ENCODE measurements at regions of chr12 and their contacts with region 1.

Region 1: DNA sequence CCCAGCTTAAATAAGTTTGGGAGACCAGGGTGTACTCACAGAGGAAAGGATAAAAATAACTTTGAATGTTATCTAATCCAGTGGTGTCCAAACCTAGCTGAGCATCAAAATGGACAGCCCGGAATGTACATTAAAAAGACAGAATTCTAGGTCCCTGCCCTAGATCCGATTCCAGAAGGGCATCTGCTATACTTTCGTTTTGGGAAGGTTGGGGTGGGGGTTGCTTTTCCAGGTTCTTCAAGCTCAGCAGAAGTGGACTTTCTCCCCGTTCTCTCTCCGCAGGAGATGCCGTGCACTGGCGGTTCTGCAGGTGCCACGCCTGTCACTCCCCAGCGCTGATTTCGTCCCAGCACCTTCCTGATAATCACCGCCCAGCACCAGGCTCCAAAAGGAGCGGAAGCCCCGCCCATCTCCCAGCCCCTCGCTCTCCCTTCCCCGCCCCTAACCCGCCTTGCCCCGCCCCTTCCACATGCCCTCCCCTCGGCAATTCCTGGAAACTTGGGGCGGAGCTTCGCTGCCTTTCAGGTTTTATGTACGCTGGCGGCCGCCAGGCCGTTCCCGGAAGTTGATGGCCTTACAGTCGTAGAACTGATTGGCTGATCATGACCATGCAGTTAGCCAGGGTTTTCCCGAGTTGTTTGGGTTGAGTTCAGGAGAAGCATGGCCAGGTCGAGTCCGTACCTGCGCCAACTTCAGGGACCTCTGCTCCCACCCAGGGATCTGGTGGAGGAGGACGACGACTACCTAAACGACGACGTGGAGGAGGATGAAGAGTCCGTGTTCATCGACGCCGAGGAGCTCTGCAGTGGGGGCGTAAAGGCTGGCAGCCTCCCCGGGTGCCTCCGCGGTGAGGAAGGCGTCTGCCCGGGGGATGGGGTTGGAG is at the start of gene HELB:
- DNase-seq: peak; percentile 94
- H3K4me3 Mint-ChIP-seq: peak within 1 kb of the TSS; percentile 100
- H3K27ac Mint-ChIP-seq: peak within 1 kb of the TSS; percentile 99
- H3K4me1 Mint-ChIP-seq: peaks cover 61% of the 10 kb centered on the region
- H3K27me3 Mint-ChIP-seq: peaks cover 3% of the 10 kb centered on the region
- total RNA-seq, gene HELB: 20.5 and 21.5 TPM in 2 replicates

Region 2: DNA sequence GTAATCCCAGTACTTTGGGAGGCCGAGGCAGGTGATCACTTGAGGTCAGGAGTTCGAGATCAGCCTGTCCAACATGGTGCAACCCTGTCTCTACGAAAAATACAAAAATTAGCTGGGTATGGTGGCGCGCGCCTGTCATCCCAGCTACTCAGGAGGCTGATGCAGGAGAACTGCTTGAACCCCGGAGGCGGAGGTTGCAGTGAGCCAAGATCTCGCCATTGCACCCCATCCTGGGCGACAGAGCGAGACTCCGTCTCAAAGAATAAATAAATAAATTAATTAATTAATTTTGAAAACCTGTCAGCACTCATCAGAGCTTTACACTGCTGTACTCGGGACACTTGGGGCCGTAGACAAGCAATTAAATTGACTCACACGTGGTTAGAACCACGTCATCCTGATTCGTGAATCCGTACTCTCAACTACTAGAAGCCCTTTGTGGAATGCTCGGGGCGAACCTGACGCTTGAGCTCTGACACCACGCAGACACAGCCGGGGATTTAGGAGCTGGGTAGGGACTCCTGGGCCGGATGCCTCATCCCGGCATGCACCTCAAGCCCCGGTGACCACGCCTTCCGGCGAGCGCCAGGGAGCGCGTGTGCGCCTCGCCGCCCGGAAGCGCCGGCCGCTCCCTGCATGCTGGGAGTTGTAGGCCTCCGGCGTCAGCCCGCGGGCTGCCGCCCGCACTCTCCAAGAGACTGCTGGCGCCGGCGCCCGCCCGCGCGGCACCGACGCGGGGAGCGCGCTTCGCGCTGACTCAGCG is 1898.3 kb before region 1 on chr12 and contains the start of gene XPOT:
- intact Hi-C with region 1: loop called (anchors 1 kb)
- DNase-seq: peak; percentile 92
- H3K4me3 Mint-ChIP-seq: peak within 1 kb of the TSS; percentile 95
- H3K27ac Mint-ChIP-seq: peak within 1 kb of the TSS; percentile 99
- H3K4me1 Mint-ChIP-seq: peaks cover 20% of the 10 kb centered on the region
- H3K27me3 Mint-ChIP-seq: no peaks in the 10 kb centered on the region
- total RNA-seq, gene XPOT: 145 and 146 TPM in 2 replicates

Region 3: DNA sequence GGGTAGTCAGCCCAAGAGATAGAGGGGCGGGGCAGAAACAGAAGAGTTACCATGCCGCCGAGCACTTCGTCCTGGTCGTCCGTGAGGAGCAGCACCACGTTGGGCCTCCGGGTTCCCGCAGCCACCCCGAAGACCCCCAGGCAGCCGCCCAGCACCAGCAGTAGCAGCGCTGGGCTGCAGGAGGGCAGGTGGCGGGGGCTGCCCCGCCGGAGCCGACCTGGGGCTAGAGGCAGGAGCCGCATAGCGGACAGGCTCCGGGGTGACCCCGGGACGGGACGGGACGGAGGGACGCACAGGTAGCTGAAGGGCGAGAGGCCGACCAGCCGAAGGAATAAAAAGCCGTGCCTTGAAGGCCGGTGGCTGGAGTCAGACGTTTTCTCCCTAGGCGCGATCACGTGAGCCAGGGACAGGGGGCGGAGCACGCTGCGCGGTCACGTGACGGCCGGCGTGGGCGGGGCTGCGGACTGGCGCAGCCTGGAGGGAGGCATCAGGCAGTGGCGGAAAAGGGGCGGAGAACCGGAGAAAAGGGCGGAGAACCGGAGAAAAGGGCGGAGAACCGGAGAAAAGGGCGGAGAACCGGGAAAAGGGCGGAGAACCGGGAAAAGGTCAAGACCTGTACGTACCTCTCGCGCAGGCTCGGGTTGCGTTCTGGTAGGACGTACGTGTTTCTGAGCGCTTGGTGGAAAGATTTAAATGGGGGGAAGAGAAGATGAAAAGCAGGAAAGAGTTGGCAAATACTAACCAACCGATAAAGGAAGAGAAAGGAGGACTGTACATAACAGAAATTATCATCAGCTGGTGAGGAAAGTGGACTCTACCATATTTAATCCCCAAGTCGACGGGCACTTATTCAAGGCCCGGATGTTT is 1542.9 kb before region 1 on chr12 and contains the start of gene GNS:
- intact Hi-C with region 1: loop called (anchors 5 kb)
- DNase-seq: peak; percentile 95
- H3K4me3 Mint-ChIP-seq: peak within 1 kb of the TSS; percentile 91
- H3K27ac Mint-ChIP-seq: peak within 1 kb of the TSS; percentile 90
- H3K4me1 Mint-ChIP-seq: peaks cover 45% of the 10 kb centered on the region
- H3K27me3 Mint-ChIP-seq: peaks cover 2% of the 10 kb centered on the region
- total RNA-seq, gene GNS: 20.6 and 21.3 TPM in 2 replicates

Region 4: DNA sequence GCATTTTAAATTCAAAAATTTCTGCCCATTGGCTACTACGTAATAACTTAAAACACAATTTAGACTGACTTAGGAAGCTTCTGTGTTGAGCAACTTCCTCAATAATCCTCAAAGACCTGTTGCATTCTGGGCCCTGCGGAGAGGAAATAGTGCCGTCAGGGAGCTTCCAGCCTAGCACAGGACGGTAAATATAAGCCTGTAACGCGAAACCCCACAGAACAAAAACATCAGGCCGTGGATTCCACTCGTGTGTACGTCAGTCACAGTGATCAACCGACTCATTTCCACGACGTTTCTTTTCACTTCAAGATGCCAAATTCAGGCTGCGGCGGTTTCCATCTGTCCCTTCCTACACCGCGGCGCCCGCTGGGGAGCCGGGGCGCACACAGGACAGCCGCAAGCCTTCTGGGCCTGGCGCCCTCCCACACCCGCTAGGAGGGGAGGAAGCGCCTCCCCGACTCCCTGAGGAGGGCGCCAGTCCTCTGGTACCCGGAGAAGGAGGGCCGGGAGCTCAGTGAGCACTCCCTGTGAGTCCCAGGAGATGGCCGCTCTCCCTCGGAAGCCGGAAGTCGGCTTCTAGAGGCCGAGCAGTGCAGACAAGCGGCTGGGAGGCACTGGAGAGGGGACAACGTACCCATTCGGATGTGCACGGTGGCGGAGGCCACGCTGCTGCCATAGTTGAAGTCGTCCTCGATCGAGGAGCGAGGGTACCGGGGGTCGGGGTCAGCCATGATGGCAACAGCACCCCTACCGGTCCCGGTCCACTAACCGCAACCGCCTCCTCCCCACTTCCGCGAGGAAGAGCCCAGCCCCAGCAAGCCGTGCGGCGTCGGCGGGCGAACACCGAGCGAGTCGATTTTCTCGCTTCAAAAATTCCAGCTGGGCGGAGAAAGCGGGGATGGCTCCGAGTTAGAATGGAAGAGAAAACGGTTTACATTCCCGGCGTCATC is 132.7 kb before region 1 on chr12 and contains the start of gene TMBIM4:
- intact Hi-C with region 1: loop called (anchors 1 kb)
- DNase-seq: peak; percentile 82
- H3K4me3 Mint-ChIP-seq: peak within 1 kb of the TSS; percentile 95
- H3K27ac Mint-ChIP-seq: peak within 1 kb of the TSS; percentile 99
- H3K4me1 Mint-ChIP-seq: peaks cover 31% of the 10 kb centered on the region
- H3K27me3 Mint-ChIP-seq: no peaks in the 10 kb centered on the region
- total RNA-seq, gene TMBIM4: 58.6 and 61.9 TPM in 2 replicates

Region 5: DNA sequence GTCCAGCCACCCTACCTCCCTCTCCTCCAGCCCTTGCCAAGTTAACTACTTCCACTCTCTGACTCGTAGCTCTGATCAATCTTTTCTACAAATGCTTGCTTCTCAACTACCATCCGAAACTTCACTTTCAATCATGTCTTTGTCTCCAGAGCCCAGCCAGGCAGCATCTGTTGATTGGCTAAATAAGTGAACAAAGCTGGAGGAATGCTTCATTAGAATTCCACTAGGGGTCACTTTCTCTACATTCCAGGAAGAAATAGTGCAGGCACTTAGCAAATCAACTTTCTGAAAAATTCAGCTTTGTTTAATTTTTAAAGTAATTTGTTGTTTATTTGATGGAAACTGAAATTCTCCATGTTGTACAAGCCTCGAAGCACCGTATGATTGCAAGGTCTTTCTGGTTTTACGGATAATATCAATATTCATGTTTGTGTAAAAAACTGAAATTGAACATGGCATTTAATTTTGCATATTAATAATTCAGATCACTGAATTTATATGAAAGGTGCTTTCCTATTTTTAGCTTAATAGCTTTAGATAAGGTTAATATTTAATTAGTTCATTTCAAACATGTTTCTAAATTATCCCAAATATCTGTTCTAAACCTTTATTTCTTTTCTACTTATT is 32.3 kb before region 1 on chr12:
- intact Hi-C with region 1: loop called (anchors 1 kb)
- DNase-seq: peak; percentile 8
- H3K4me3 Mint-ChIP-seq: no peak overlapping the region
- H3K27ac Mint-ChIP-seq: no peak overlapping the region
- H3K4me1 Mint-ChIP-seq: peaks cover 3% of the 10 kb centered on the region
- H3K27me3 Mint-ChIP-seq: no peaks in the 10 kb centered on the region

Region 6: DNA sequence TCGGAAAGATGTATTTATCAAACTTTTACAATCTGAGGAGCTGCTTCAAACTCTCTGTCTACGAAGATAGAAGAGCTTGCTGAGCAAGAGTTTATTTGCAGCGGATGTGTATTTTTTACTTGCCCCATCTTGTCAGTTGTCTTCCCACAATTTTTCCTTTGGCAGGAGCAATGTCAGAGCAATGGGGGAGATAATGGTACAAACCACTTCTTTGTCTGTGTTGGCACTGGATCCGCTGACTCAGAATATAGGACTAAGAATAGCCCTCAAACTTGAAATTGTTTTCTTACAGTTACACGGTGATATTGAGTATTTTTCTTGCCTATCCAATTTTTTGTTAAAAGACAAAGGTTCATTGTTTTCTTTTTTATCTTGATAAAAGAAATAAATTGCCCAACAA is 27.8 kb after region 1 on chr12:
- intact Hi-C with region 1: no loop called
- DNase-seq: no peak
- H3K4me3 Mint-ChIP-seq: no peak overlapping the region
- H3K27ac Mint-ChIP-seq: no peak overlapping the region
- H3K4me1 Mint-ChIP-seq: peaks cover 14% of the 10 kb centered on the region
- H3K27me3 Mint-ChIP-seq: no peaks in the 10 kb centered on the region

Region 7: DNA sequence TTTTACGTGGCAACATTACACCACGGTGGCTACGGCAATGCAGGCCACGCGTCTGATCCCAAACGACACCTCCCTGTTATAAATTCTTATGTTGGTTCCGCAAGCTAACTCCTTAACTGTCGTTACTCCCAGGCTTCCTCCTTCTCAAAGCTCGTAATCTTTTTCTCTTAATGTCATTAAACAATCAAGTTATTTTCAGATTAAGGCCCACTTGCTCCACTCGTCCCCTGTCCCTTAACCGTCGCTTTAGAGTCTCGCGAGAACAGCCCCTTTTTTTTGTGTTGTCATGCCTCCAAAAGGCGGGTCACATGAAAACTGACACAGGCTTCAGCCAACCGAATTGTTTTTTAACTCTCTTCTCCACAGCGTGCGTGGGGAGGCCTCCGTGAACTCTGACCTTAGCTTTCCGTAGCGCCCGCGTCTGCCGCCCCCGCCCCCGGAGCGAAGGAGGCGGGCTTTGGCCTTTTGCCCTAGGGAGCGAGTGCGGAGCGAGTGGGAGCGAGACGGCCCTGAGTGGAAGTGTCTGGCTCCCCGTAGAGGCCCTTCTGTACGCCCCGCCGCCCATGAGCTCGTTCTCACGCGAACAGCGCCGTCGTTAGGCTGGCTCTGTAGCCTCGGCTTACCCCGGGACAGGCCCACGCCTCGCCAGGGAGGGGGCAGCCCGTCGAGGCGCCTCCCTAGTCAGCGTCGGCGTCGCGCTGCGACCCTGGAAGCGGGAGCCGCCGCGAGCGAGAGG is 966.9 kb after region 1 on chr12 and contains the start of gene CAND1:
- intact Hi-C with region 1: loop called (anchors 2 kb)
- DNase-seq: peak; percentile 94
- H3K4me3 Mint-ChIP-seq: peak within 1 kb of the TSS; percentile 92
- H3K27ac Mint-ChIP-seq: peak within 1 kb of the TSS; percentile 99
- H3K4me1 Mint-ChIP-seq: peaks cover 39% of the 10 kb centered on the region
- H3K27me3 Mint-ChIP-seq: no peaks in the 10 kb centered on the region
- total RNA-seq, gene CAND1: 185 and 209 TPM in 2 replicates

Measured in activated T-helper 1 cell treated with anti-CD3 and anti-CD28 coated beads, Interleukin-12 subunit alpha, Interleukin-12 subunit beta, Interleukin-2, Interleukin-4 antibody, amounts not matched to agents 30 ng/mL and 10 ng/mL and 1 ng/mL, durations not matched to agents 14 hours and 24 hours and 36 hours (primary cell).